ENCODE measurements at regions of chr12 and their contacts with region 1.

Region 1: DNA sequence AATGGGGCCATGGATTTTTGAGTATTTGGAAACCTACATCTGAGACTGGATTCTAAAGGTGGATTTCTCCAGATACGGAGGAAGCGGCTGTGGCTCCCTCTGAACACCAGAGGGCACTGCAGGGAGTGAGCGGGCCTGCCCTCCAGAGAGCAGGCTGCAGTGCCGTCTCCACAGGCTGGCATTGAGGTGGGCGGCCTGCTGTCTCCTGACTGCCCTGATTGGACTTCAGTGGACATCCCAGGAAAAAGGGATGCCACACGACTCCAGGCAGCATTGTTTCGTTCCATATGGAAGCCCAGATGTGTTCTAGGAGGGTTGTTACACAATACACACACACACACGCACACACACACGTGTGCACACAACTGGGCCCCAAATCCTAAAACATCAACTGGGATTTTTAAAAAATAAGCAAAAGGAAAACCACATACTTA is 20.9 kb upstream of the ANO2 start:
- DNase-seq: peak; percentile 74
- ATAC-seq: peak; percentile 79
- H3K4me3 Mint-ChIP-seq: no peak overlapping the region
- H3K27ac Mint-ChIP-seq: no peak overlapping the region
- H3K4me1 Mint-ChIP-seq: peaks cover 38% of the 10 kb centered on the region
- H3K27me3 Mint-ChIP-seq: peaks cover 5% of the 10 kb centered on the region; the same call in 1 of the 2 replicates
- CTCF ChIP-seq: peak; percentile 55

Region 2: DNA sequence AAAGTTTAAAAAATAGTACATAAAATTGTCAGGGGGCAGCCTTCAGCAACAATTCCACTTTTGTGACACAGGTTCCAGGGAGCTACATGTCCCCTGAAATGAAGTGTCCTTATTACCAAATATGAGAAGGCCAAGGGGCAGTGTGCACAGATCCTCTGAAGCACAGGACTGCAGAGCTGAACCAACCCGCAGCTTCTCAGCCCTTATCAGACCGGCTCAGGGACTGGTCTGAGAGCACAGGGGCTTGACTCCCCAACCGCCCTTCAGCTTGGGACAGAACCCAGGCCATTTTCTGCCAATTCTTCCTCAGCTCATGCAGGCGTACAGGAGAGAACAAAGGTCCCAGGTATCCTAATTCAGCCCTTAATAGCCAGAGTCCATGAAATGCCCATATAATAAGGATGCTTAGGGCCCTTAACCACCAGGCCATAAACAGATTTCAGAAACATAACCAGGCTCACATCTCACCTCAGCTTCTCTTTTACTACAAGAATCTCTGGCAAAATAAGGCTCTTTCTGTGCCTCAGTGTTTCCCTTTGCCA is 242.2 kb before region 1 on chr12:
- CTCF ChIA-PET with region 1: no interaction called
- POLR2A ChIA-PET with region 1: no interaction called
- DNase-seq: no peak
- ATAC-seq: no peak
- H3K4me3 Mint-ChIP-seq: no peak overlapping the region
- H3K27ac Mint-ChIP-seq: no peak overlapping the region
- H3K4me1 Mint-ChIP-seq: peaks cover 4% of the 10 kb centered on the region
- H3K27me3 Mint-ChIP-seq: no peaks in the 10 kb centered on the region
- CTCF ChIP-seq: no peak

Region 3: DNA sequence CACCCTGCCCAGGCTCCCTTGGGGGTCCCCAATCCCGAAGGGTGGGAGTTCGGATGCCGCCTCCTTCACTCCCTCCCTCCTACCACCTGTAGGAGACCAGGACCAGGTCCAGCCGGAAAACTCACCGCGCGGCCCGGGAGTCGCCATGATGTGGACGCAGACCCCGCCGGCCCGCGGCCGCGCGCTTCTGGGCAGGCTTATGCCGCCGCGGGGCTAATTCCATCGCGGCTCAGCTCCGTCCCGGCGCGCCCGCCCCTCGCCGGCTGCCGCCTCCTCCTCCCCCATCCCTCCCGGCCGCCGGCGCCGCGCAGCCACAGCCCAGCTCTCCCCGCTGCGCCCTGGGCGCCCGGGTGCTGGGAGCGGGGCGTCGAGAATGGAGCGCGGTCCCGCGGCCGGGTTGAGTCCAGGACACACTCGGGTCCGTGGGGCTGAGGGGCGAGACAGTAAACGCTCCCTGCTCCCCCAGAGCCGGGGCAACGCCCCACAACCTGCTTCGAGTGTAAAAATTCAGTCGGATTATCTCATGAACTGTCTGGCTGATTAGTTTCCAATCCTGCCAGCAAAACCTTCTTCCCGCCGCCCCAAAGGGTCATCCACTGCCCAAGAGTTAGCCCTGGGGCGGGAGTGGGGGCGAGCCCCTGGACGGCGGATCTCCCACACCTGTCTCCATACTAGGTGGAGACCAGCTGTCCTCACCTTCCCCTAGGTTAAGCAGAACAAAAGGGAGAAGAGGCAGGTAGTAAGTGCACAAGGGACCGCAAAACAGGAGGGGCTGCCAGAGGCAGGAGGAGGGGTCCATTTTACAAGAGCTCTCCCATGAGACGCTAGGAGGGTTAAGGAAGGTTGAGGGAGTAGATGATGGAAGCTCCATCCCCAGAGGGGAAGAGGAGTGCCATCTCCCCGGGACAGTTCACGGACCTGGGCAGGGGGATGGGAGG is 20.6 kb before region 1 on chr12 and contains the start of gene ANO2:
- CTCF ChIA-PET with region 1: interaction called, 12 read pairs
- POLR2A ChIA-PET with region 1: no interaction called
- DNase-seq: peak; percentile 75
- ATAC-seq: peak; percentile 87
- H3K4me3 Mint-ChIP-seq: peak within 1 kb of the TSS; percentile 92
- H3K27ac Mint-ChIP-seq: peak within 1 kb of the TSS; percentile 78
- H3K4me1 Mint-ChIP-seq: peaks cover 27% of the 10 kb centered on the region
- H3K27me3 Mint-ChIP-seq: peaks cover 52% of the 10 kb centered on the region
- CTCF ChIP-seq: no peak
- total RNA-seq, gene ANO2: 2.8 to 4.0 TPM (median 3.1 TPM) in 3 replicates

Region 4: GRCh38 chr12:5997260-5997659 is 31.3 kb after region 1 on chr12:
- CTCF ChIA-PET with region 1: no interaction called
- POLR2A ChIA-PET with region 1: no interaction called
- DNase-seq: no peak
- ATAC-seq: no peak
- H3K4me3 Mint-ChIP-seq: no peak overlapping the region
- H3K27ac Mint-ChIP-seq: no peak overlapping the region
- H3K4me1 Mint-ChIP-seq: no peaks in the 10 kb centered on the region
- H3K27me3 Mint-ChIP-seq: no peaks in the 10 kb centered on the region
- CTCF ChIP-seq: no peak